IMR-90 (cell line): ENCODE measurements at regions of chr11 and their contacts with region 1.

Region 1: DNA sequence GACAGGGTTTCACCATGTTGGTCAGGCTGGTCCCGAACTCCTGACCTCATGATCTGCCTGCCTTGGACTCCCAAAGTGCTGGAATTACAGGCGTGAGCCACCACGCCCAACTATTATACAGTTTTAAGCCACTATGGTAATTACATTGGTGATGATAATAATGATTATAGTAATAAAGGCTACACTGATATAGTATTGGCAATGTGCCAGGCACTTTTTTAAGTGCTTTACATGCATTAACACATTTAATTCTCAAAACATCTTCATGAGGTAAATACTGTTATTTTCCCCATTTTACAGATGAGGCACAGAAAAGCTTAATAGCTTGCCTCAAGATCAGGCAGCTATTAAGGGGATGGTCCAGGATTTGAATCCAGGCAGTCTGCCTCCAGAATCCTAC is 222.5 kb downstream of the SOX6 start:
- DNase-seq: no peak
- ATAC-seq: no peak
- H3K4me3 ChIP-seq: no peak overlapping the region
- H3K27ac ChIP-seq: no peak overlapping the region
- H3K4me1 ChIP-seq: no peaks in the 10 kb centered on the region; the same call in 1 of the 2 replicates
- H3K27me3 ChIP-seq: no peaks in the 10 kb centered on the region
- CTCF ChIP-seq: no peak
- POLR2A ChIP-seq: no peak
- RAD21 ChIP-seq: no peak

Region 2: GRCh38 chr11:16117989-16118756 is 15.7 kb before region 1 on chr11:
- CTCF ChIA-PET with region 1: no interaction called
- POLR2A ChIA-PET with region 1: interaction called, 12 read pairs
- dilution Hi-C with region 1: no loop called
- in situ Hi-C with region 1: no loop called
- intact Hi-C with region 1: no loop called
- DNase-seq: no peak
- ATAC-seq: no peak
- H3K4me3 ChIP-seq: no peak overlapping the region
- H3K27ac ChIP-seq: no peak overlapping the region
- H3K4me1 ChIP-seq: no peaks in the 10 kb centered on the region
- H3K27me3 ChIP-seq: no peaks in the 10 kb centered on the region
- CTCF ChIP-seq: no peak
- POLR2A ChIP-seq: no peak
- RAD21 ChIP-seq: no peak

Region 3: GRCh38 chr11:16166571-16166970 is 32.7 kb after region 1 on chr11:
- CTCF ChIA-PET with region 1: no interaction called
- POLR2A ChIA-PET with region 1: interaction called, 11 read pairs
- dilution Hi-C with region 1: no loop called
- in situ Hi-C with region 1: no loop called
- intact Hi-C with region 1: no loop called
- DNase-seq: peak; percentile 69
- ATAC-seq: peak; percentile 43
- H3K4me3 ChIP-seq: no peak overlapping the region
- H3K27ac ChIP-seq: no peak overlapping the region
- H3K4me1 ChIP-seq: peaks cover 6% of the 10 kb centered on the region
- H3K27me3 ChIP-seq: no peaks in the 10 kb centered on the region
- CTCF ChIP-seq: no peak
- POLR2A ChIP-seq: no peak
- RAD21 ChIP-seq: no peak